Pancreas (tissue), 10 donors: ENCODE measurements at regions of chr2 and their contacts with region 1.

Region 1: DNA sequence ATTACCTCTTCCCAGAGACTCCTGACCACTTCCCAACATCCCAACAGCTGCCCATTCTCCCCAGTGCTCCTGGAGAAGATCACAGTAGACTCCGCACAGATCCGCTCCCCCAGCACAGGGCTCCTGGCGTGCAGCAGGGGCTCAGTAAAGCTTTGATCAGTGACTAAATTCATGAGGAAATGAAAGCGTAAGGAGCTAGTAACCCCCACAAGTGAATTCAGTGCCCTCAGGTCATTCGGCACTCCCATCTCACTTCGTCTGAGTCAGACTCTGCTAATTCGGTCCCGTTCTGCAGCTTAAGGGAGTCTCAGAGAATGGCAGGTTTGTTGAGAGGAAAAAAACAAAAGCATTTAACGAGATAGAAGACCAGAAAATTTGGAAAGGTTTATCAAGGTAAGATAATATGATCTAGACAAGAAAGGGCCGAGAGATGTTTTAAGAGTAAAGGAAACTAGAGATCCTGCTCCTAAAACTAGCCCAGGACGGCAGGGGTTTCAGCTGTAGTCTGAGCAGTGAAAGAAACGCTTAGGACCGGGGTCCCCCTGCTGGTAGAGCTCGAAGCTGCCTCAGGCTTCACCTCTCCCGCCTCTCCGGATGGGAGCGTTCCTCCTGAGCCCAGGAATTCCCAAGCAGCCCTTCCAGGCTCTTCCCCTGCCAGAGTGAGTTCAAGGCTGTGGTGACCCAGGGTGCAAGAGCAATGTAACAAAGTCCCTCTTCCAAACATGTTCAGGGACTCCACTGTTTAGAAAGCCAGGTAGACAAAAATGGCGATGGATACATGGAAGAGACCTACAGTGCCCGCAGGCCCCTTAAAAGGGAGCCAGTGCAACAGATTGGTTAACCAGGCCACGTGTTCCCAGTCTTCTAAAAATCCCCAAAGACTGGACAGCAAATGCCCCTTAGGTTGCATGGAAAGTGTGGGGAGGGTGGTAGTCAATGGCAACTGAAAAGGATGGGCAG is 127.3 kb downstream of the DNER start:
- DNase-seq: peak; percentile 48 to 84 (median 74)
- ATAC-seq: peak; percentile 86 to 99 (median 98)
- H3K4me3 ChIP-seq: peak overlapping the region in 1 of 4 donors; percentile 17
- H3K27ac ChIP-seq: no peak overlapping the region
- H3K4me1 ChIP-seq: no peaks in the 10 kb centered on the region
- H3K27me3 ChIP-seq: no peaks in the 10 kb centered on the region
- CTCF ChIP-seq: peak; percentile 64 to 81 (median 76)

Region 2: DNA sequence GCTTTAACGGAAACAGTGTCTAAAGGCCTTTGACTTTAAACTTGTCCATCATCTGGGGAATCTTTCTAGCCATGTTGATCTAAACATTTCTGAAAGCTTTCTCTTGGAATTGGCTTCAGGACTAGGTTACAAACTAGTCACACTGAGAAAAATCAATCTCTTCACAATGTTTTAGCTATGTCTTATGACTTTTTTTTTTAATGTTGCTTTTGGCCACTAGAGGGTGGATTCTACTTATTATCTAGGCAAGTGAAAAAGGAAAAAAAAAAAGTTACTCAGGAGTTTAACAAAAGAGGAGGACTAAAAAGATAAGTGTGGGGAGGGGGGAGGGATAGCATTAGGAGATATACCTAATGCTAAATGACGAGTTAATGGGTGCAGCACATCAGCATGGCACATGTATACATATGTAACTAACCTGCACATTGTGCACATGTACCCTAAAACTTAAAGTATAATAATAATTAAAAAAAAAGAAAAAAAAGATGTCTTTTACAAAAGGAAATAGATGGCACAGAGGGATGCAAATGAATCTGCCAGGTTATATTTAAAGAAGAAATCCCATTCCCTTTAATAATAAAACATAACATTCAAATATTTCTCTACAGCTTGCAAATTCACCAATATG is 155.6 kb before region 1 on chr2:
- intact Hi-C with region 1: loop called in 1 of 3 experiments (anchors 10 kb)
- DNase-seq: no peak
- ATAC-seq: peak in 1 of 4 donors; percentile 30
- H3K4me3 ChIP-seq: no peak overlapping the region
- H3K27ac ChIP-seq: no peak overlapping the region
- H3K4me1 ChIP-seq: no peaks in the 10 kb centered on the region
- H3K27me3 ChIP-seq: no peaks in the 10 kb centered on the region
- CTCF ChIP-seq: peak in 3 of 4 donors; percentile 20 to 36 (median 24)